ENCODE measurements at regions of chr1 and their contacts with region 1.

Region 1: DNA sequence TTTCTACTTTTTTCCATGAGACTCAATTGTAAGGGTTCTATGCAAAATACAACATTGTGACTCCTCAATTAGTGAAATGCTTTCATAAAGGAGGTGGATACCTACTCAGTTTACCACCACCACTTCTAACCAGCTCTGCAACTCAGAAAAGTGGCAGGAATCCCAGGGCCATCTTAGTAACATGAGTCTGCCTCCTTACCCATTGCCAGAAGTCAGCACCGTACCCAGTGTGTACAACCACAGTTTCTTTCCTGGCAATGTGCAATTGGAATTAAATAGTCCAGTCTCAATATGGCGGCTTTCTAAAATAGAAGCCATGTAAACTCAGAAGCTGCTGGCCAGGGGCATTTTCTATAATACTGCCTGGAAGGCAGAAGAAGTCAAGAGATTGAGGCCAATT is 32.1 kb downstream of the TESK2 start:
- DNase-seq: no peak
- H3K4me3 ChIP-seq: no peak overlapping the region
- H3K27ac ChIP-seq: no peak overlapping the region
- H3K4me1 ChIP-seq: no peaks in the 10 kb centered on the region
- H3K27me3 ChIP-seq: no peaks in the 10 kb centered on the region
- CTCF ChIP-seq: no peak

Region 2: DNA sequence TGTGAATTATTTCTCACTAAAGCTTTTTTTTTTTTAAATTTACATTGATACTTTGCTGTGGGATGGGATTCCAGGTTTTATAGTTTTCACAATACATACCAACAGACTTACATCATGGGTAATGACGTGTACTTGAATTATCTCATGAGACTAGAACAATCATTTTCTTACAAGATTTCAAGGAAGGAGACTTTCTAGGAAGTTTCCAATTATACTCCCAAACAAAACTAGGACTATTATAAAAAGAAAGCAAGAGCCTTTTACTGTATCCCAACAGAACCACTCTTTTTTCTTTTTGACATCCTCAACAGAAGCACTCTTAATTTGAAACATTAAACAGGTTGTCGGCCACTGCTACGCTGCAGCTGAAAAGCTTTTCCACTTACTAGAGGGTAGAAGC is 16.6 kb before region 1 on chr1:
- intact Hi-C with region 1: loop called (anchors 2 kb)
- DNase-seq: no peak
- H3K4me3 ChIP-seq: no peak overlapping the region
- H3K27ac ChIP-seq: no peak overlapping the region
- H3K4me1 ChIP-seq: no peaks in the 10 kb centered on the region
- H3K27me3 ChIP-seq: no peaks in the 10 kb centered on the region
- CTCF ChIP-seq: no peak